Left ventricle myocardium inferior (tissue), 1 donor: ENCODE measurements at regions of chr20 and their contacts with region 1.

Region 1: GRCh38 chr20:49631061-49631788 is 63.3 kb upstream of the PTGIS start:
- DNase-seq: no peak
- H3K4me3 ChIP-seq: no peak overlapping the region
- H3K27ac ChIP-seq: peak overlapping the region; percentile 59
- H3K4me1 ChIP-seq: peaks cover 34% of the 10 kb centered on the region
- H3K27me3 ChIP-seq: no peaks in the 10 kb centered on the region
- CTCF ChIP-seq: no peak

Region 2: GRCh38 chr20:49699200-49699992 is 68.2 kb after region 1 on chr20:
- intact Hi-C with region 1: loop called (anchors 10 kb)
- DNase-seq: no peak
- H3K4me3 ChIP-seq: no peak overlapping the region
- H3K27ac ChIP-seq: no peak overlapping the region
- H3K4me1 ChIP-seq: peaks cover 75% of the 10 kb centered on the region
- H3K27me3 ChIP-seq: no peaks in the 10 kb centered on the region
- CTCF ChIP-seq: no peak